ENCODE measurements at regions of chr12 and their contacts with region 1.

Region 1: DNA sequence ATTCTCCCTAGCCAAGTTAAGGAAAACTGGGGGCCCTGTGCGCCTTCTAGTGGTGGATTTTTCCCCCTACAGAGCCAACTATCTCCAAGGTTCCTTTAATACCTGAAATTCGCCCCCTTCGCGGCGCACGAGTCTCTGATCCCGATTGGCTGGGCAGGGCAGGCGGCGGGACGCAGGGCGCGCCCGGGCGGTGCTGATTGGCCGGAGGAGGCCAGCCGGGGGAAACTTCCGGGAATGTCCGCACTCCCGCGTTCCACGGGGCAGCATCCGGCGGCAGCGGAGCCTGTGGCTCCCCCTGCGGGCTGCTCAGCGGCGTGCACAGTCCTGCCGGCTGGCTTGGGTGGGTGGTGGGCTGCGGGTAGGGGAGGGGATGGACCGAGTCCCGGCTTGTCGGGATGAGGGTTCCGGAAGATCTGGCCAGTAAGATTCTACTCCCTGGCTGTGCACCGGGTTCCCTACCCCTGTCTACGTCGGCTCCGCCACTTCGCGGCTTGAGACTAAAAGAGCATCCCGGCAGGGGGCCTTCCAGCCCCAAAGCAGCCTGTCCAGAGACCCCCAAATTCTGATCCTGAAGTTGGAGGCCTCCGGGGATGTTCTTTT is at the start of gene NABP2:
- DNase-seq: peak; percentile 96 to 98 (median 98)
- H3K4me3 ChIP-seq: peak within 1 kb of the TSS; percentile 55 to 95 (median 78)
- H3K27ac ChIP-seq: peak within 1 kb of the TSS; percentile 52 to 99 (median 89)
- H3K27me3 ChIP-seq: no peaks in the 10 kb centered on the region
- CTCF ChIP-seq: peak in 55 of 56 donors; percentile 80 to 99 (median 93)
- total RNA-seq, gene NABP2: 32.1 to 66.4 (median 49.1) TPM

Region 2: DNA sequence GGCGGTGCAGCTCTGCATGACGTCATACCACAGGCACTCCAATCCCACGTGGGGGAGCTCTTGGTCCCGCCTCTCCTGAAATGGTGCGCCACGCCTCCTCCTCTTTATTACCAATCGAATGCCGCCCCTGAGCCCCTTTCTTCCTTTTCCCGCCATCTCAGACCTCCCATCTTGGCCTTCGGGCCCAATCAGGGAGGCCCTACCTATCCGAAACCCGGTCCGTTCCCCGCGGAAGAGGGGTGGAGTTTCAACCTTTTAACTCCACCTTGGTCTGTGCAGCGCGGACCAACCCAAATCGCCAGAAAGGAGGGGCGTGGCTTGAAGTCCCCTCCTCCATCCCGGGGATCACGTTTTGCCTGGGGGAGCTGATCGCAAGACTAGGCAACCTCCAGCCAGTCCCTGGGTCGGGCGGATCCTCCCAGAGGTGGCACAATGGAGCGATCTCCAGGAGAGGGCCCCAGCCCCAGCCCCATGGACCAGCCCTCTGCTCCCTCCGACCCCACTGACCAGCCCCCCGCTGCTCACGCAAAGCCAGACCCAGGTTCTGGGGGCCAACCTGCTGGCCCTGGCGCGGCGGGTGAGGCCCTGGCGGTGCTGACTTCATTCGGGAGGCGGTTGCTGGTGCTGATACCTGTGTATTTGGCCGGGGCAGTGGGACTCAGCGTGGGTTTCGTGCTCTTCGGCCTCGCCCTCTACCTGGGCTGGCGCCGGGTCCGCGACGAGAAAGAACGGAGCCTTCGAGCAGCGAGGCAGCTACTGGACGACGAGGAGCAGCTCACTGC is 96.1 kb before region 1 on chr12 and contains the start of gene ESYT1:
- intact Hi-C with region 1: loop called in 1 of 2 experiments (anchors 5 kb)
- DNase-seq: peak; percentile 81 to 99 (median 98)
- H3K4me3 ChIP-seq: peak within 1 kb of the TSS; percentile 63 to 98 (median 85)
- H3K27ac ChIP-seq: peak within 1 kb of the TSS; percentile 38 to 93 (median 84)
- H3K27me3 ChIP-seq: no peaks in the 10 kb centered on the region
- CTCF ChIP-seq: peak in 43 of 56 donors; percentile 3 to 63 (median 34)
- total RNA-seq, gene ESYT1: 32.5 to 86.2 (median 56.5) TPM

Region 3: GRCh38 chr12:56158029-56158925 is 65.9 kb before region 1 on chr12 and contains the start of gene MYL6:
- intact Hi-C with region 1: loop called in 1 of 2 experiments (anchors 2 kb)
- DNase-seq: peak; percentile 92 to 100 (median 98)
- H3K4me3 ChIP-seq: peak within 1 kb of the TSS; percentile 60 to 95 (median 85)
- H3K27ac ChIP-seq: peak within 1 kb of the TSS; percentile 67 to 97 (median 92)
- H3K27me3 ChIP-seq: no peaks in the 10 kb centered on the region
- CTCF ChIP-seq: peak in 6 of 56 donors; percentile 4 to 21 (median 7)
- total RNA-seq, gene MYL6: 295 to 716 (median 377) TPM

Region 4: GRCh38 chr12:56258057-56258819 is 34.0 kb after region 1 on chr12 and contains the start of gene ANKRD52:
- intact Hi-C with region 1: loop called (anchors 1 to 5 kb)
- DNase-seq: peak; percentile 48 to 85 (median 71)
- H3K4me3 ChIP-seq: peak within 1 kb of the TSS; percentile 62 to 98 (median 91)
- H3K27ac ChIP-seq: peak within 1 kb of the TSS; percentile 24 to 94 (median 88)
- H3K27me3 ChIP-seq: no peaks in the 10 kb centered on the region
- CTCF ChIP-seq: peak in 54 of 56 donors; percentile 13 to 96 (median 70)
- total RNA-seq, gene ANKRD52: 32.7 to 75.7 (median 55.2) TPM